ENCODE measurements at regions of chr17 and their contacts with region 1.

Region 1: DNA sequence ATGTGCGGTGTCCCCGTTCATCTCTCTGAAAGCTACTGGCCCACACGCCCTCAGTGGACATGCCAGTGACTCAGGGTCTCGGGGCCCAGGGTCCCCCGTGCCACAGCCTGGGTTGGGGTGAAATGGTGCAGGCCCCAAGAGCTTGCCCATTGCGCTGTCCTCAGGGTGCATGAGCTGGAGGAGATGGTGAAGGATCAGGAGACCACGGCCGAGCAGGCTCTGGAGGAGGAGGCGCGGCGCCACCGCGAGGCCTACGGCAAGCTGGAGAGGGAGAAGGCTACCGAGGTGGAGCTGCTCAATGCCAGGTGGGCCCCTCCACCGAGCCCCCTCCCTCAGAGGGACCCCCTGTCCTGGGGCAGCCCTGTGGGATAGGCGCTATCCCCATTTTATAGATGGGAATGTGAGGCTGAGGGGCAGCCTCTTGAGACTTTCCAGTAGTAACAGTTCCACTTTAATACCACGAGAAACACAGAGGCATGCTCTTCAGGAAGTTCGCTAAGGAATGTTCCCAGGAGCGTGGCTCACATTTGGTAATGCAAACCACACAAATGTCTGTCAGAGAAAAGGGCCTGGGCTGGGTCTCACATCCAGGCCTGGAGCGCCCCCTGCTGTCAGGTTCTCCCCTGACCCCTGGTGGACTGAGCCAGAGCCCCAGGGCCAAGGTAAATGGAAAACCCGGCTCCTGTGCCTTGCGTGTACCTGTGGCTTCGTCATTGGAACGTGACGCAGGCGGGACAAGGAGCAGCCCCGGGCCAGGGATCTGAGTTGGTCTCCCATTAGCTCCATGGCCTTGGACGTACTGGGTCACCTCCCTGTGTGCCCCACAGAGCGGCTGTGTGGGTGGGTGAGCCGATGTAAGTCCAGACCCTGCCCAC is 133.7 kb downstream of the RAB11FIP4 start:
- H3K4me3 ChIP-seq: no peak overlapping the region
- H3K27ac ChIP-seq: no peak overlapping the region
- H3K4me1 ChIP-seq: no peaks in the 10 kb centered on the region; the same call in 1 of the 2 replicates
- CTCF ChIP-seq: peak; percentile 80

Region 2: DNA sequence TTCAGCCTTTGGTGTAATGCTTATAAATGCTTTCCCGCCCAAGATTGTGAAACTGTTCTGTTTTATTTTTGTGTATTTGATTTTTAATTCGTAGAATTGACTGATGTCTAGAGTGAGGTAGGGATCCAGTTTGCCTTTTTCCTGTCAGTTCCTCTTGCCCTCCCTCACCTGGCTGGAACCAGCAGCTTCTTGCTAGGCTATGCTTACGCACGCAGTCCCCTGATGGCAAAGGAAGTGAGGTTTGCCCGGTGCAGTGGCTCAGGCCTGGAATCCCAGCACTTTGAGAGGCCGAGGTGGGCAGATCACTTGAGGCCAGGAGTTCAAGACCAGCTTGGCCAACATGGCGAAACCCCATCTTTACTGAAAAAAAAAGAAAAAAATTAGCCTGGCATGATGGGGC is 81.8 kb before region 1 on chr17:
- CTCF ChIA-PET with region 1: interaction called, 111 read pairs
- POLR2A ChIA-PET with region 1: interaction called, 3 read pairs
- H3K4me3 ChIP-seq: no peak overlapping the region
- H3K27ac ChIP-seq: no peak overlapping the region
- H3K4me1 ChIP-seq: no peaks in the 10 kb centered on the region
- CTCF ChIP-seq: no peak

Region 3: DNA sequence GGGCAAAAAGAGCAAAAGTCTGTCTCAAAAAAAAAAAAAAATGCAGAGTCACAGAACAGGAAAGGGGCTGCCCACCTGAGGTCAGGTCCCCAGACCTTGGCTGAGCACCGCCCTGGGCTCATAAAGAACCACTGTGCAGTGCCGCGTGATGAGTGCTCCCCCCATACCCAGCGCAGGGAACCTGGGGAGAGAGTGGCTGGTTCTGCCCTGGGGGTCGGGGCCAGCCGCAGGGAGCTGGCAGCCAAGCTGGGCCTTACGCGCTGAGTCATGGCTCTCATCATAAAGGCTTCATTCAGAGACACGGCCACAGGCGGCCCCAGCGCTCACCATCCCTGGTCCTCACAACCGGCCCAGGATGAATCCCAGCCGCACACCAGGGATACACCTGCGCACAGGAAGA is 53.0 kb before region 1 on chr17:
- CTCF ChIA-PET with region 1: no interaction called
- POLR2A ChIA-PET with region 1: no interaction called
- H3K4me3 ChIP-seq: no peak overlapping the region
- H3K27ac ChIP-seq: no peak overlapping the region
- H3K4me1 ChIP-seq: no peaks in the 10 kb centered on the region
- CTCF ChIP-seq: no peak

Region 4: GRCh38 chr17:31623990-31624389 is 98.8 kb after region 1 on chr17:
- CTCF ChIA-PET with region 1: no interaction called
- POLR2A ChIA-PET with region 1: no interaction called
- H3K4me3 ChIP-seq: no peak overlapping the region
- H3K27ac ChIP-seq: no peak overlapping the region
- H3K4me1 ChIP-seq: no peaks in the 10 kb centered on the region
- CTCF ChIP-seq: no peak

Measured in HEK293 (cell line).